Activated CD4-positive, alpha-beta T cell treated with anti-CD3 and anti-CD28 coated beads, Interleukin-2, amount 10 ng/mL, durations not matched to agents 24 days and 14 days (primary cell): ENCODE measurements at regions of chr9 and their contacts with region 1.

Region 1: DNA sequence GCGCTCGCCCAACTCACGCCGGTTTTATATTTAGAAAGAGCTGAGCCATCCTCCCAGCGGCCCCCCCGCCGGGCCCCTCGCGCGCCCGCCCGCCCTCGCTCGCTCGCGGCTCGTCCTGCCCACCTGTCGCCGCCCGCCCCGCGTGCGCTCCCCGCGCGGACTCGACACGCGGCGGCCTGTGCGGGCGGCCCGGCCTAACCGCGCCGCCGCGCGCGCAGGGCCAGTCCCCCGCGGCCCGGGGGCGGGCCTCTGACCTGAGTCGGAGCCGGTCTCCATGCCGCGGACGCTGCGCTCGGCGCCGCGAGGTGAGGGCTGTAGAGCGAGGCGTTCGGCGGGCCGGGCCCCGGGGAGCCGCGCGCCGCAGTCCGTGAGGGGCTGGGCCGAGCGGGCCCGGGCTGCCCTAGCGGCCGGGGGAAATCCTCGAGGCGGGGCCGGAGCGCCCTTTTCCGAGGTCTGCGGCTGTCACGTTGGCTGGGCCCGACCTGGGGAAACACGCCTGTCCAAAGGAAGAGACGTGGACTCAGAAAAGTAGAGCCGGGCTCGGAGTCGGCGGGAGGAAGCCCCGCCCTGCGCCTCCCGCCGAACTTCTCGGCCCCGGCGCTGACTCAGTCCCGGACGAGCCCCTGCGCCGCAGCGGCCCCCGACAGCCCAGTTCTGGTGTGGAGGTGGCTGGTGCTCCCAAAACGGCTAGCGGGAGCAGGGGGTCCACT is at the start of gene ECPAS:
- DNase-seq: peak; percentile 90
- H3K4me3 Mint-ChIP-seq: peak within 1 kb of the TSS; percentile 89
- H3K27ac Mint-ChIP-seq: peak within 1 kb of the TSS; percentile 76
- H3K4me1 Mint-ChIP-seq: peaks cover 29% of the 10 kb centered on the region
- H3K27me3 Mint-ChIP-seq: peaks cover 12% of the 10 kb centered on the region
- total RNA-seq, gene ECPAS: 102 and 117 TPM in 2 replicates

Region 2: GRCh38 chr9:111440226-111440625 is 43.8 kb before region 1 on chr9:
- intact Hi-C with region 1: loop called (anchors 5 kb)
- DNase-seq: no peak
- H3K4me3 Mint-ChIP-seq: no peak overlapping the region
- H3K27ac Mint-ChIP-seq: no peak overlapping the region
- H3K4me1 Mint-ChIP-seq: peaks cover 5% of the 10 kb centered on the region
- H3K27me3 Mint-ChIP-seq: no peaks in the 10 kb centered on the region

Region 3: GRCh38 chr9:111525056-111525977 is 41.3 kb after region 1 on chr9 and contains the start of gene ZNF483:
- intact Hi-C with region 1: loop called (anchors 1 kb)
- DNase-seq: peak; percentile 91
- H3K4me3 Mint-ChIP-seq: peak within 1 kb of the TSS; percentile 88
- H3K27ac Mint-ChIP-seq: peak within 1 kb of the TSS; percentile 81
- H3K4me1 Mint-ChIP-seq: peaks cover 14% of the 10 kb centered on the region
- H3K27me3 Mint-ChIP-seq: no peaks in the 10 kb centered on the region
- total RNA-seq, gene ZNF483: 1.8 and 2.2 TPM in 2 replicates

Region 4: DNA sequence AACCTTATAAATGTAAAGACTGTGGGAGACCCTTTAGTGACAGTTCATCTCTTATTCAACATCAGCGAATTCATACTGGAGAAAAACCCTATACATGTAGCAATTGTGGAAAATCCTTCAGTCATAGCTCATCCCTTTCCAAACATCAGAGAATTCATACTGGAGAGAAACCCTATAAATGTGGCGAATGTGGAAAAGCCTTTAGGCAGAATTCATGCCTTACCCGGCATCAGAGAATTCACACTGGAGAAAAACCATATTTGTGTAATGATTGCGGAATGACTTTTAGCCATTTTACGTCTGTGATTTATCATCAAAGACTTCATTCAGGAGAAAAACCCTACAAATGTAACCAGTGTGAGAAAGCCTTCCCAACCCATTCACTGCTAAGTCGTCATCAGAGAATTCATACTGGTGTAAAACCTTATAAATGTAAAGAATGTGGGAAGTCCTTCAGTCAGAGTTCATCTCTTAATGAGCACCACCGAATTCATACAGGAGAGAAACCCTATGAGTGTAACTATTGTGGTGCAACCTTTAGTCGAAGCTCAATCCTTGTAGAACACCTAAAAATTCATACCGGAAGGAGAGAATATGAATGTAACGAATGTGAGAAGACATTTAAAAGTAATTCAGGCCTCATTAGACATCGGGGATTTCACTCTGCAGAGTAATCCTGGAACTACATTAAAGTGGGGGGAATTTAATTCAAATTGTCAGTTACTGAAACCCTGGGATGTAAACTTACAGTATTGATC is 58.7 kb after region 1 on chr9:
- intact Hi-C with region 1: no loop called
- DNase-seq: no peak
- H3K4me3 Mint-ChIP-seq: no peak overlapping the region
- H3K27ac Mint-ChIP-seq: no peak overlapping the region
- H3K4me1 Mint-ChIP-seq: no peaks in the 10 kb centered on the region
- H3K27me3 Mint-ChIP-seq: no peaks in the 10 kb centered on the region

Region 5: GRCh38 chr9:111631071-111631971 is 147.3 kb after region 1 on chr9 and contains the start of gene DNAJC25:
- intact Hi-C with region 1: loop called (anchors 1 kb)
- DNase-seq: peak; percentile 99
- H3K4me3 Mint-ChIP-seq: peak within 1 kb of the TSS; percentile 98
- H3K27ac Mint-ChIP-seq: peak within 1 kb of the TSS; percentile 92
- H3K4me1 Mint-ChIP-seq: peaks cover 42% of the 10 kb centered on the region
- H3K27me3 Mint-ChIP-seq: no peaks in the 10 kb centered on the region
- total RNA-seq, gene DNAJC25: 7.1 and 7.5 TPM in 2 replicates

Region 6: DNA sequence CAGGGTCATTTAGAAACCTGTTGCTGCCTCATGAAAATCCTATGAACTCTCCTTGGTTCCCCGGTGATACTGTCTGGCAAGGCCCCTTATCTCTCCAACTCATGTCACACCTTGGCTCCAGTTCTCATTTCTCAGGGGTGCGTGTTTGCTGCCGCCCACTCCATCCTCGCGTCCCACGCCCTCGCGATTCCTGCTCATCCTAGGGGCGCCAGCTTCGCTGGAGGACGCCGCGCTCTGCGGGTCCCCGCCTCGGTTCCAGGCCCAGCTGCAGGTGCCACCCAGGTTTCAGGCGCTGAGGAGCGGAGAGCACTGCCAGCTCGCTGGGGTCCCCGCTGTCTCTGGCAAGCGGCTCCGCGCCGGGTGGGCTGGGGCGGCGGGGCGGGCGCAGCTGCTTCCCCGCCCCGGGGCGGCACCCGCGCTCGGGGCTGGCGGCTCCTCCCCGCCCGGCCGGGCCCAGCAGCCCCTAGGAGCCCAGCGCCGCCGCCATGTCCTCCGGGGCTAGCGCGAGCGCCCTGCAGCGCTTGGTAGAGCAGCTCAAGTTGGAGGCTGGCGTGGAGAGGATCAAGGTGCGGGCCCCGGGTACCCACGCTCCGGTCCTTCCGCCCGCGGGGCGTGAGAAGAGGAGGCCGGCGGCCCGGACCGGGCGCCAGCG is 177.3 kb after region 1 on chr9 and contains the start of gene GNG10:
- intact Hi-C with region 1: loop called (anchors 1 kb)
- DNase-seq: peak; percentile 92
- H3K4me3 Mint-ChIP-seq: peak within 1 kb of the TSS; percentile 90
- H3K27ac Mint-ChIP-seq: peak within 1 kb of the TSS; percentile 97
- H3K4me1 Mint-ChIP-seq: peaks cover 28% of the 10 kb centered on the region
- H3K27me3 Mint-ChIP-seq: no peaks in the 10 kb centered on the region
- total RNA-seq, gene GNG10: 30.9 and 31.7 TPM in 2 replicates

Region 7: DNA sequence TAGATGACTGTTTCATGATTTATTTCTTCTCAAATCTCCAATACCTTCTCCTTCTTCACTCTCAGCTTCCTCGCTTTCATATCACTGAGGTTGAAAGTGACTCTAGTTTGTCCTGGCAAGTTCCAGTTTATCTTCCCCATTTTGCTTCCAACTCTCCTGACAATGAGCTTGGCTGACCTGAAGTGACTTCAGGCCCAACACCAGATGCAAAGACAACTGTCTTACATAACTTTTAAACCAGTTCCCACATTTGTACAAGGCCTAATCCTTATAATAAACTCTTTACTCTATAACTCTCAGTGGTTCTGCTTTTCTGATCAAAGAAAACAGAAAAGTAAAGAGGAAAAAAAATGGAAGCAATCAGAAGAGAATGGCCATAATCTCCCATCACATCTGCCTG is 199.4 kb after region 1 on chr9:
- intact Hi-C with region 1: no loop called
- DNase-seq: no peak
- H3K4me3 Mint-ChIP-seq: no peak overlapping the region
- H3K27ac Mint-ChIP-seq: no peak overlapping the region
- H3K4me1 Mint-ChIP-seq: peaks cover 2% of the 10 kb centered on the region
- H3K27me3 Mint-ChIP-seq: no peaks in the 10 kb centered on the region

Region 8: GRCh38 chr9:112379177-112380101 is 895.4 kb after region 1 on chr9:
- intact Hi-C with region 1: loop called (anchors 10 kb)
- DNase-seq: peak; percentile 100
- H3K4me3 Mint-ChIP-seq: peak overlapping the region; percentile 100
- H3K27ac Mint-ChIP-seq: peak overlapping the region; percentile 100
- H3K4me1 Mint-ChIP-seq: peaks cover 42% of the 10 kb centered on the region
- H3K27me3 Mint-ChIP-seq: no peaks in the 10 kb centered on the region